PC-9 (cell line): ENCODE measurements at regions of chr3 and their contacts with region 1.

Region 1: DNA sequence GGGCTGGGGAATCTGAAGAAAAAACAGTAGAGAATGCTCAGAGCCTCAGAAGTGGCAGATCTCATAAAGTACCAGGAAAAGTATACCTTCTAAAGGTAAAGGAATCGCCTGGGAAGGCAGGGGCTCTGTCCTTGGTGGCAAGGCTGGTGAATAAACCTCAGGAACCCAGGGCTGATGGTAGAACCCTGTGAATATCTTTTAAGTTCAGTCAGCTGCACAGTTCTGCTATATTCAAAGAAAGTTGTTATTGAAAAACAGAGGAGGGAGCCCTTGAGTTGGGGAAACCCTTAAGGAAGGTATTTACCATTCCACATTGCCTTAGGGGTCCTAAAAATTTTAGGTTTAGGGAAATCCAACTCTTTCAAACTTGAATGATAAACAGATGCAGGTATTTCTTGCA is 31.2 kb downstream of the ZPLD1 start:
- DNase-seq: no peak
- H3K4me3 ChIP-seq: no peak overlapping the region
- H3K27ac ChIP-seq: no peak overlapping the region
- H3K4me1 ChIP-seq: peaks cover 3% of the 10 kb centered on the region; the same call in 1 of the 2 replicates
- H3K27me3 ChIP-seq: no peaks in the 10 kb centered on the region
- CTCF ChIP-seq: peak; percentile 48

Region 2: DNA sequence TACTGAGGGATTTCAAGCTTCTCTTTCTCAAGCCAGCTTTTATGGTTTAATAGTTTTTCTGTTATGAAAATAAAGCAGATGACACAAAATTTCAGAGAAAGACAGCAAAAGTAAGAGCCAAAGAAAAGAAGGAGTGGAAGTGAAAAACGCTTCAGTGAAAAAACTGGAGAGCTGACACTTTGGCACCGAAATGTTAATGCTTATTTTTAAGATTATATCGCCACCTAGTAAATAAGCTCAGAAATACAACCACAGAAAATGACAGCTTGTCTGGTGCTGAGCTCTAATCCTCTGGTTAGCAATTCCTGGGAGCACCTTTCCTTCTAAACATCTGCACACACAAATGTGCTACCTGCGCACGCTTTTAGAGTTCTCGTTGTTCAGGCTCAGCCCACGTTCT is 70.5 kb after region 1 on chr3:
- CTCF ChIA-PET with region 1: no interaction called
- POLR2A ChIA-PET with region 1: no interaction called
- intact Hi-C with region 1: loop called (anchors 2 kb)
- DNase-seq: peak in 1 of 2 experiments; percentile 50
- H3K4me3 ChIP-seq: no peak overlapping the region; the same call in 1 of the 2 replicates
- H3K27ac ChIP-seq: no peak overlapping the region
- H3K4me1 ChIP-seq: peaks cover 9% of the 10 kb centered on the region; the same call in 1 of the 2 replicates
- H3K27me3 ChIP-seq: no peaks in the 10 kb centered on the region
- CTCF ChIP-seq: peak; percentile 78